Vagina (tissue), 2 donors: ENCODE measurements at regions of chrX and their contacts with region 1.

Region 1: GRCh38 chrX:118325453-118325852 is 20.5 kb upstream of the WDR44 start:
- DNase-seq: no peak
- H3K4me3 ChIP-seq: no peak overlapping the region
- H3K27ac ChIP-seq: no peak overlapping the region
- H3K4me1 ChIP-seq: no peaks in the 10 kb centered on the region
- H3K27me3 ChIP-seq: no peaks in the 10 kb centered on the region
- CTCF ChIP-seq: no peak
- POLR2A ChIP-seq: no peak

Region 2: DNA sequence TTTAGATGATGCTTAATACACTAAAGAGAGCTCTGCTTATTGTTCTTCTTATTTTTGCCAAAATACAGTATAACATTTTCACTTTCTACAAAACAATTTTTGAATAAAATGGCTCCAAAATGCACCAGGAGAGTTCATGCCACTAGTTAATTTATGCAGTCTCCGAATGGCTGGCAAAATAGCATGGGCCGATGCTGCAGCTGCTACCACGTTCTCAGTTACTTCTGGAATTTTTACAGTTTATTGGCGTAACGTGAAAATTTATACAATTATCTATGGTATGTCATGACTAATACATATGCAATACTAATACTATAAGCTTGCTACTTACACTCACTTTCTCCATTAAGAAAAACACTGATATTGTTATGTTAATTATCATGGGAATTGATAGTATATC is 225.4 kb before region 1 on chrX:
- intact Hi-C with region 1: loop called (anchors 5 kb)
- DNase-seq: no peak
- H3K4me3 ChIP-seq: no peak overlapping the region
- H3K27ac ChIP-seq: no peak overlapping the region
- H3K4me1 ChIP-seq: no peaks in the 10 kb centered on the region
- H3K27me3 ChIP-seq: no peaks in the 10 kb centered on the region
- CTCF ChIP-seq: no peak
- POLR2A ChIP-seq: no peak

Region 3: DNA sequence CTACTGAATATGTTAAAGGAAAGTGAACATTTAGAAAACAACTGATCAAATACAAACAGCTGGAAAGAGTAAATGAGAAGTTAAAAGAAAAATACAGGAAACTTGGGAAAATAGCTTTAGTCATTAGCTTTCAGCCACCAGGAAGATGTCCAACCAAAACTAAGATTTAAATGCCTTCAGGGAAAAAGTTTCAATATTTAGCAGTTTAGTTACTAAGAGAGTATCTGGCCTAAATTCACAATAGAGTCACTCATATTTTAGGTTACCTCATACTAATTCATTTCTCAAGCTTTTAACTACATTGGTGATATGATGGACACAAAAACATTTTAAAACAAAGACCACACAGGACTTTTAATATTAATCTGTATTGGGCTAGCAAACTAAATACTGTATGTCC is 195.8 kb before region 1 on chrX:
- intact Hi-C with region 1: no loop called
- DNase-seq: no peak
- H3K4me3 ChIP-seq: no peak overlapping the region
- H3K27ac ChIP-seq: no peak overlapping the region
- H3K4me1 ChIP-seq: no peaks in the 10 kb centered on the region
- H3K27me3 ChIP-seq: no peaks in the 10 kb centered on the region
- CTCF ChIP-seq: no peak
- POLR2A ChIP-seq: no peak

Region 4: DNA sequence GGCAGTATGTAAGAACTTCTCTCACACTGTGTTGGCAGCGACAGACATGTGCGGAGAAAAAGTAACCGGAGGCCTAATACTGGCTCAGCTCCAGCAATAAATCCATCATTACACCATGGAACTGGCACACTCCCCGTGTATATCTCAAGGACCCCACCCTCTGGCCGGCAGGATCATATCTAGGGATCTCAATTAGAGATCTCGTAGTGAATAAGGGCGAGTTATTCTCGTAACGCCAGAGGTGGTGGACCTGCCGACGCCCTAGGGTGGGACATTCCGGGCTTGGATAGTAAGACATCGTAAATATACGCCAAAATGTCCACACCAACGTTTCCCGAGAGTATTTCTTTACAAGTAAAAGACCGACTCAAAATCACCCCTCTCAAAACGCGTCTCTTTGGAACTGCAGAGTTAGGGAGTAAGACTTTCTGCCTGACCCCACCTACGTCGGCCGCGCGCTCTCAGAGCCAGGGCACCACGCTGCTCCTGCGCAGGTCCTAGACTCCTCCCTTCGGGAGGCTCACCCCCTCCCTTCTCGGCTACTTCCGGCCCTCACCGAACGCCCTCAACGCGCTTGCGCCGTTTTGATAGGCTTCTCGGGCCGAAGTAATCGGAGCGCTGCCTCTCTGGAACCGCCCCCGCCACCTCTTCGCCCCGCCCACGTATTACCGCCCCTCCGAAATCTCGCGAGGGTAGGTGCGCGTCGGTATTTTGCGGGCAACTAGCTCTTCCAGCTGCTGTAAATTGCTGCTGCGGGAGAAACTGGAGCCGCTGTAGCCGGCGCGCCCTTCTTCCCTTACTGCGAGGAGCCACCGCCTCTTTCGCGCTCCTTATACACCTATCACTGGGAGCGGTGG is 20.2 kb after region 1 on chrX and contains the start of gene WDR44:
- intact Hi-C with region 1: no loop called
- DNase-seq: peak; percentile 95 to 97
- H3K4me3 ChIP-seq: peak within 1 kb of the TSS; percentile 63 to 64
- H3K27ac ChIP-seq: peak within 1 kb of the TSS; percentile 89
- H3K4me1 ChIP-seq: peaks cover 10% of the 10 kb centered on the region
- H3K27me3 ChIP-seq: no peaks in the 10 kb centered on the region
- CTCF ChIP-seq: no peak
- POLR2A ChIP-seq: peak in 1 of 2 donors; percentile 67
- total RNA-seq, gene WDR44: 22.1 TPM

Region 5: GRCh38 chrX:118370921-118371624 is 45.6 kb after region 1 on chrX:
- intact Hi-C with region 1: loop called (anchors 1 kb)
- DNase-seq: no peak
- H3K4me3 ChIP-seq: no peak overlapping the region
- H3K27ac ChIP-seq: no peak overlapping the region
- H3K4me1 ChIP-seq: no peaks in the 10 kb centered on the region
- H3K27me3 ChIP-seq: no peaks in the 10 kb centered on the region
- CTCF ChIP-seq: no peak
- POLR2A ChIP-seq: no peak